ENCODE measurements at regions of chr10 and their contacts with region 1.

Region 1: DNA sequence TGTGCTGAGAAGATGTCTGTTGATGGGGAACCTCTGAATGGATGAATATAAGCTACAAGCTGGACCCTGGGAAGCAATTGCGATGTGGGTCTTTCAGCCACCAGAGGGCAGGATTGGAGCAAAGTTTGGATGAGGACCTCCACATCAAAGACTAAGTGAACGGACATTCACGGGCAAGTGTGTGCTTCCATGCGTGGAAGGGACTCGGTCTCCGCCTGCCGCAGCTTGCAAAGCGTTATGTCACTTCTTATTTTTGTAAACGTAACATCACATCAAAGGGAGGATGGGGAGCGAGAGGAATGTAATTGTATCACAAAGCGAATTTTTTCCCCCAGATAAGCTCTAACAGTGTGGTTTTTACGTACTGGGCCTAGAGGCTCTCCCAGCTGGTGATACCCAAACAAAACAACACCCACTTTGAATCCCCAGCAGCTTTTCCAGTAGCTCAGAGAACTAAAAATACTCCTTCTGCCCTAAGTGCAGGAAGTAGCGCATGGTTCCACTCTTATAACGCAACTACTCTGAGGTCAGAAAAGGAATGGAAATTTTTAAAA is 65.0 kb downstream of the VWA2 start:
- DNase-seq: peak; percentile 80
- ATAC-seq: peak; percentile 90

Region 2: DNA sequence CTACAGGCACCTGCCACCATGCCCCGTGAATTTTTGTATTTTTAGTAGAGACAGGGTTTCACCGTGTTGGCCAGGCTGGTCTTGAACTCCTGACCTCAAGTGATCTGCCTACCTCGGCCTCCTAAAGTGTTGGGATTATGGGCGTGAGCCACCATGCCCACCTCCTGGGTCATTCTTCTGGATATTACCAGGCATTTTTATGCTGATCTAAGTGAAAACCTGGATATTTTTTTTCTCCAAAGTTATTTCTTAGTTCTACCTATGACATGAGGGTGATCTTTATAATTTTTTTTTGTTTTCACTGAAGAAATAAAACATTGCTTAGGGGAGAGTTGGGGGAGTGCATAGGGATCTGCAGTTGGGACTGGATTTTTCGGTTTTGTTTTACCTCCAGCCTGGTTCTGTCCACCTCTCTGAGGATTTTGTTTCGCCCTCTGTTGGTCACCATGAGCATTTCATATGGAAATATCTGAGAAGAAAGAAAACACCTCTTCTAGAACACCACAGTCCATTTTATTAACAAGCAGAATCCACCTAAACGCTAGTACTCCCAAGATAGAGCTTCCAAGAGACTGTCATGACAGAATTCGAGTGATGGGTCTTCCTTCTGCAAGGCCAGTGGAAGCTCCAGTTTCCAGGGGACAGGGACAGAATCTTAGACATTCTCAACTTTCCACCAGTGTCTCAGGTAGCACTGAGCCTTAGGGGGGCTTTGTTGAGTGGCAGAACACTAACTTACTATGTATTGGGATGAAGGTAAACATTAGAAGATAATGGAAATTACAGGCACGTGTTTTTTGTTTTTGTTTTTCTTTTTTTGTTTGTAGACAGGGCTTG is 133.6 kb after region 1 on chr10:
- intact Hi-C with region 1: loop called (anchors 10 kb)
- DNase-seq: no peak
- ATAC-seq: no peak

Measured in left ventricle myocardium superior (tissue), 1 donor.